HCT116 (cell line): ENCODE measurements at regions of chr7 and their contacts with region 1.

Region 1: DNA sequence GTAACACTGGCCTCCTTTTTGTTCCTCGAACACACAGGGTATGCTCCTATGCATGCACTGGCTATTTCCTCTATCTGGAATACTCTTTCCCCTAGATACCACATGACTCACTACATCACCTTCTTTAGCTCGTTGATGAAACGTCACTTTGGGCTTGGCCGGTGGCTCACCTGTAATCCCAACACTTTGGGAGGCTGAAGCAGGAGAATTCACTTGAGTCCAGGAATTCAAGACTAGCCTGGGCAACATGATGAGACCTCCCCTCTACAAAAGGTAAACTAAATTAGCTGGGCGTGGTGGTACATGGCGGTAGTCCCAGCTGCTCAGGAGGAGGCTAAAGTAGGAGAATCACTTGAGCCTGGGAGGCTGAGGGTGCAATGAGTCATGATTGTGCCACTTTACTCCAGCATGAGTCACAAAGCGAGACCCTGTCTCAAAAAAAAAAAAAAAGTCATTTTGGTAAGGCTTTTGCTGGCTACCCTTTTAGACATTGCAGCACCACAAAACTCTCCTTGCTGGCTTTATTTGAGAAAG is 14.5 kb downstream of the ANKIB1 start:
- DNase-seq: peak; percentile 83
- ATAC-seq: peak; percentile 94
- H3K4me3 ChIP-seq: peak overlapping the region; percentile 4 to 39; a peak in 2 of 4 replicates
- H3K27ac ChIP-seq: peak overlapping the region; percentile 67
- H3K4me1 ChIP-seq: peaks cover 21 to 38% of the 10 kb centered on the region in 2 experiments
- H3K27me3 ChIP-seq: no peaks in the 10 kb centered on the region
- CTCF ChIP-seq: no peak
- POLR2A ChIP-seq: no peak
- RAD21 ChIP-seq: no peak; the same call in 1 of the 2 replicates

Region 2: DNA sequence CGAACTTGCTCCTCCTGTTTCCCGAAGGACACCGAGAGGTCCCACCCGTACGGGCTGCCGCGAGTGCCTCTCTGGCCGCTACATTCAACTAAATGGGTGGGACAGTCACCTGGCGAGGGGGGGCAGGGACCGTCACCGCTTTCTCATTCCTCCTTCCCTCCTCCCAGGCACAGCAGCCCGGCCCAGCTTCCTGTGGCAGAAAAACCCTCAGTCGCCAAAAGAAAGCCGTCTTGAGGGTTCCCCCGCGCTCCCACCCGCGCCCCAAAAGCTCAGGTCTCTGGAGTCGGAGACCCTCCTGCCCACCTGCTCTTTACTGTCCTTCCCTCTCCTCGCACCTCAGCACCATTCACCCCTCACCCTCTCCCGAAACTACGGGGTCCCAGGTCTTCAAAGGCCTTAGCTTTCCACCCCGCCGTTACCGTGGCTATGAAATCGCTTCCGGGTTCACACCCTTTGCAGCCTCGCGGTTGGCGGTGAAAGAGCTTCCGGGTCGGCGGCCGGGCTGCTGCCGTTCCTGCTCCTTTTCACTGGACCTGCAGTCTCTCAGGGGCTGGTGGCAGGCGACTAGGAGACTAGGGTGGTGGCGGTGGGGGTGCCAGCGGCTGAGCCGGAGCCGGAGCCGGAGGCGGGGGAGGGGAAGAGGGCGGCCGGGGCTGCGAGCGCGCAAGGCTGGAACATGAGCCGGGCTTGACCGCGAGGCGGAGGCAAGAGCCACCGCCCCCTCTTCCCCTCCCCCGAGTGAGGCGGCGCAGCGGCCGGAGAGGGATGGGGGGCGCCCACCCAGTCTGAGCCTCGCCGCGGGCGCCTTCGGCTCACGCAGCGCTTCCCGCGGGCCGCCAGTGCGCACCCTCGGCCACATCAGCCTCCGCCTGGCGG is 14.6 kb before region 1 on chr7 and contains the starts of genes ANKIB1 and KRIT1:
- CTCF ChIA-PET with region 1: interaction called, 4 read pairs
- POLR2A ChIA-PET with region 1: interaction called, 22 read pairs
- RAD21 ChIA-PET with region 1: no interaction called
- intact Hi-C with region 1: no loop called
- DNase-seq: peak; percentile 81
- ATAC-seq: peak; percentile 84
- H3K4me3 ChIP-seq: peak within 1 kb of the TSS; percentile 82 to 92
- H3K27ac ChIP-seq: peak within 1 kb of the TSS; percentile 79
- H3K4me1 ChIP-seq: peaks cover 11 to 24% of the 10 kb centered on the region in 2 experiments; a peak in 3 of 4 replicates
- H3K27me3 ChIP-seq: no peaks in the 10 kb centered on the region
- CTCF ChIP-seq: 0 out of 6 replicates have a peak, but pooled peaks of 1 of the 3 experiments have one; percentile 4
- POLR2A ChIP-seq: peak; percentile 66
- RAD21 ChIP-seq: no peak
- total RNA-seq, gene ANKIB1: 41.2 TPM
- total RNA-seq, gene KRIT1: 32.4 TPM

Region 3: DNA sequence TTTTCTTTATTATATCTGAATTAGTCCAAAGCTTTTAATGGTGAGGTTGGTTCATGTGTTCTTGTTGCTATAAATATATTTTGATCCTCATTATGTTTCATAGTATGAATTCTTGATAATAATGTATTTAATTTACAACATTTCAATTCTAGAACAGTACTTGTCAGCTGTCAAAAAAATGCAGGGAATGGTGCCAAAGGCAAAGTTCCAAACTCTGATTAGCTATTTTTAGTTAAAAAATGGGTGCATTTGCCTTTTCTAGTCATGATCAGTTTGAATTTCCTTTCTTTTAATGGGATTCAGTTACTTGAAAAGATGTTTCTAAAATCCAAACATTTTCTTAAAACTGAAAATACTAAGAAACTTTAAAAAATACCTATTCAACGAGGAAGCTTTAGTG is 35.1 kb after region 1 on chr7:
- CTCF ChIA-PET with region 1: no interaction called
- POLR2A ChIA-PET with region 1: no interaction called
- RAD21 ChIA-PET with region 1: no interaction called
- intact Hi-C with region 1: loop called (anchors 5 kb)
- DNase-seq: no peak
- ATAC-seq: no peak
- H3K4me3 ChIP-seq: no peak overlapping the region
- H3K27ac ChIP-seq: no peak overlapping the region
- H3K4me1 ChIP-seq: peaks cover 0 to 3% of the 10 kb centered on the region in 2 experiments; a peak in 1 of 4 replicates
- H3K27me3 ChIP-seq: no peaks in the 10 kb centered on the region
- CTCF ChIP-seq: no peak
- POLR2A ChIP-seq: no peak
- RAD21 ChIP-seq: no peak